ENCODE measurements at regions of chr7 and their contacts with region 1.

Region 1: GRCh38 chr7:116180302-116180701 is 30.0 kb upstream of the TES start:
- DNase-seq: peak in 18 of 35 experiments; percentile 3 to 76 (median 18)
- ATAC-seq: peak; percentile 79 to 81 (median 80)
- H3K4me3 ChIP-seq: no peak overlapping the region
- H3K4me3 Mint-ChIP-seq: no peak overlapping the region
- H3K27ac ChIP-seq: no peak overlapping the region
- H3K27ac Mint-ChIP-seq: no peak overlapping the region
- H3K4me1 ChIP-seq: no peaks in the 10 kb centered on the region
- H3K4me1 Mint-ChIP-seq: peaks cover 0 to 8% (median 8%) of the 10 kb centered on the region in 3 donors
- H3K27me3 ChIP-seq: no peaks in the 10 kb centered on the region
- H3K27me3 Mint-ChIP-seq: no peaks in the 10 kb centered on the region

Region 2: GRCh38 chr7:116211006-116211912 is 31.0 kb after region 1 on chr7:
- CTCF ChIA-PET with region 1: interaction called, 19 to 35 read pairs
- POLR2A ChIA-PET with region 1: interaction called in 1 of 2 experiments, 3 read pairs
- DNase-seq: peak; percentile 58 to 89 (median 76)
- ATAC-seq: peak; percentile 84 to 89 (median 86)
- H3K4me3 ChIP-seq: peak overlapping the region; percentile 81 to 98
- H3K4me3 Mint-ChIP-seq: peak overlapping the region; percentile 97
- H3K27ac ChIP-seq: peak overlapping the region; percentile 91
- H3K27ac Mint-ChIP-seq: peak overlapping the region; percentile 97
- H3K4me1 ChIP-seq: peaks cover 17 to 42% of the 10 kb centered on the region in 2 experiments
- H3K4me1 Mint-ChIP-seq: peaks cover 52 to 63% (median 53%) of the 10 kb centered on the region in 3 donors
- H3K27me3 ChIP-seq: no peaks in the 10 kb centered on the region
- H3K27me3 Mint-ChIP-seq: no peaks in the 10 kb centered on the region

Region 3: DNA sequence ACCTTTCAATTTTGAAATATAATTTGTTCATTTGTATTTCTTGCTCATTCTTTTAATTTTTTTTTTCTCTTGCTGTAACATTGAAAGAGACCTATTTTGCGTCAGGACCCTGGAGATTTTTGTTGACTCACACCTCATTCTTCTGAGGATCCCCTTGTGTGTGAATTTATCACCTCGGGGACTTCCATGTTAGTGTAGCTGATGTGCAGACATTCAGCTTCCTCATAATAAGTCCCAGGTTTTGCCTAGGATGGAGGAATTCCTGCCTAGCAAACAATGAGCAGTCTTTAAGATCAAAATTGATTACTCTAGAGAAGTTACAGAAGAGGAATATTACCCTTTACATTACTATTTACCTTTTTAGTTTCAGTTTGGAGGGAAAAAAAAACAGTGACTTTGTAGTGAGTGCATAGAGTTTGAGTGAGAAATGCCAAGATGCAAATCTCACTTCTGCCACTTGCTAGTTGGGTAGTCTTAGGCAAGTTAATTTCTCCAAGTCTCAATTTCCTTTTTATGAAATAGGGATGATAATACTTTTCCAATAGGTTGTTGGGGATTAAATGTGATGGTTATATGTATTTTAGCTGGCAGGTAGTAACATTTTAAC is 44.3 kb after region 1 on chr7:
- CTCF ChIA-PET with region 1: interaction called, 243 to 450 read pairs
- POLR2A ChIA-PET with region 1: no interaction called
- DNase-seq: peak in 3 of 35 experiments; percentile 3 to 58 (median 9)
- ATAC-seq: peak in 2 of 4 experiments; percentile 57 to 82
- H3K4me3 ChIP-seq: no peak overlapping the region
- H3K4me3 Mint-ChIP-seq: peak overlapping the region; percentile 57 to 64 (median 58)
- H3K27ac ChIP-seq: no peak overlapping the region
- H3K27ac Mint-ChIP-seq: peak overlapping the region; percentile 60 to 69
- H3K4me1 ChIP-seq: peaks cover 15 to 57% of the 10 kb centered on the region in 2 experiments
- H3K4me1 Mint-ChIP-seq: peaks cover 87 to 93% (median 91%) of the 10 kb centered on the region in 3 donors
- H3K27me3 ChIP-seq: no peaks in the 10 kb centered on the region
- H3K27me3 Mint-ChIP-seq: no peaks in the 10 kb centered on the region

Region 4: GRCh38 chr7:116271963-116272839 is 91.9 kb after region 1 on chr7:
- CTCF ChIA-PET with region 1: interaction called in 1 of 2 experiments, 11 read pairs
- POLR2A ChIA-PET with region 1: no interaction called
- DNase-seq: no peak
- ATAC-seq: no peak
- H3K4me3 ChIP-seq: no peak overlapping the region
- H3K4me3 Mint-ChIP-seq: no peak overlapping the region
- H3K27ac ChIP-seq: no peak overlapping the region
- H3K27ac Mint-ChIP-seq: no peak overlapping the region
- H3K4me1 ChIP-seq: no peaks in the 10 kb centered on the region
- H3K4me1 Mint-ChIP-seq: no peaks in the 10 kb centered on the region
- H3K27me3 ChIP-seq: no peaks in the 10 kb centered on the region
- H3K27me3 Mint-ChIP-seq: peaks cover 27 to 32% of the 10 kb centered on the region in 2 donors

Measured in T-cell (primary cell).